Psoas muscle (tissue), 8 donors: ENCODE measurements at regions of chr10 and their contacts with region 1.

Region 1: GRCh38 chr10:119028900-119029612 is 458 bp upstream of the NANOS1 start:
- DNase-seq: peak; percentile 92 to 95
- ATAC-seq: peak; percentile 80 to 86 (median 82)
- H3K4me3 ChIP-seq: peak overlapping the region; percentile 61
- H3K27ac ChIP-seq: peak overlapping the region; percentile 83
- H3K4me1 ChIP-seq: peaks cover 28% of the 10 kb centered on the region
- H3K27me3 ChIP-seq: no peaks in the 10 kb centered on the region
- CTCF ChIP-seq: peak; percentile 33

Region 2: DNA sequence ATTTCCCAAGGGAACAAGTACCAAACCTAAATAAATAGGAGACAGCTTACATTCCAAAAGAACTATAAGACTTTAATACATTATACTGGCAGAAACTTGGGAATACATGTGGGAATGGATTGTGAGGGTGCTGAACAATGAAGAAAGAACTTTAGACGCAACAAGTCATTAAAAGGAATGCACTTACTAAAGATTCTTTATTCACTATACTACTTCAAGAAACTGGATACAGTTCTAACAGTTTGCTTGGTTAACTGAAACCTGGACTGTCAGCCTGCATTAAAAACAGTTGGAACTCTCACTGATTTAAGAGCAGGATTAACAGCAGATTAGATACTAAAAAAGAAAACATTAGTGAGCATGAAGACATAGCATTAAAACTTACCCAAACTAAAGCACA is 286.3 kb before region 1 on chr10:
- intact Hi-C with region 1: loop called in 1 of 2 experiments (anchors 10 kb)
- DNase-seq: no peak
- ATAC-seq: peak in 3 of 4 donors; percentile 15 to 41 (median 39)
- H3K4me3 ChIP-seq: peak overlapping the region; percentile 1
- H3K27ac ChIP-seq: peak overlapping the region; percentile 61
- H3K4me1 ChIP-seq: peaks cover 59% of the 10 kb centered on the region
- H3K27me3 ChIP-seq: no peaks in the 10 kb centered on the region
- CTCF ChIP-seq: no peak

Region 3: DNA sequence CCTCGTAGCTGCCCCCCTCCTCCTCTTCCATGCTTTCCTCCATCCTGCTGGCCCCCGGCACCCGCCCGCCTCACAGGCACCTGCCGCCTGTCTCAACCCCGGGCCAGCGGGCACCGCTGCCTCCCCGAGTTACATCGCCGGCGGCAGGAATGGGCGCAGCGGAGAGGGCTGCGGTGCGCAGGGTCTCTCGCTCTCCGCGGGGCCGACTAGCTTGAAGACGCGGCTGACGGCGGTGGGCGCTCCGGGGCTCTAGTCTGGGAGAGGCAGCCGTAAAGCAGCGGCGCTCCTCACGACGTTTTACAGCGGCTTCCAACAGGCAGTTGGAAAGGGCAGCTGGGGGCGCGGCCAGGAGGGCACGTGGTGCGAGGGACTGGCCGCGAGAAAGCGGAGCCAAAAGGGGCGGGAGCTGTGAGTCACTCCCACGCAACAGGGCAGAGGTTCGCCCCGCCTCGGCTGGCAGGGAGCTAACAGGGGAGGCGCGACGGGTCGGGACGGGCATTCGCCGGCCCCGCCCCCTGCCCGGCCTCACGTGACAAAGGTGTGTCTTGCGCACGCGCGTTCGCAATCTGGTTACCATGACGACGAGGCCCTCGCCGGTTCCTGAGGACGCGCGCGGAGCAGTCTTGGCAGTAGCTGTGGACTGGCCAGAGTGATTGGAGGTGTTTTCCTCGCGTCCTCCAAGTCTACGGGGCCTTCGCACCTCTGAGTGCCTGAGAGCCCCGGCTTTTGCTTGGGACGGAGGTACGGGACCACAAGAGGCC is 274.2 kb before region 1 on chr10 and contains the start of gene CACUL1:
- intact Hi-C with region 1: loop called in 1 of 2 experiments (anchors 10 kb)
- DNase-seq: peak; percentile 100
- ATAC-seq: peak; percentile 95 to 99 (median 98)
- H3K4me3 ChIP-seq: peak within 1 kb of the TSS; percentile 77
- H3K27ac ChIP-seq: peak within 1 kb of the TSS; percentile 93
- H3K4me1 ChIP-seq: peaks cover 32% of the 10 kb centered on the region
- H3K27me3 ChIP-seq: no peaks in the 10 kb centered on the region
- CTCF ChIP-seq: no peak
- total RNA-seq, gene CACUL1: 22.1 to 41.0 (median 39.6) TPM

Region 4: GRCh38 chr10:118870467-118871243 is 158.4 kb before region 1 on chr10:
- intact Hi-C with region 1: loop called in 1 of 2 experiments (anchors 10 kb)
- DNase-seq: no peak
- ATAC-seq: peak in 3 of 4 donors; percentile 46 to 68 (median 58)
- H3K4me3 ChIP-seq: no peak overlapping the region
- H3K27ac ChIP-seq: no peak overlapping the region
- H3K4me1 ChIP-seq: peaks cover 8% of the 10 kb centered on the region
- H3K27me3 ChIP-seq: no peaks in the 10 kb centered on the region
- CTCF ChIP-seq: no peak

Region 5: DNA sequence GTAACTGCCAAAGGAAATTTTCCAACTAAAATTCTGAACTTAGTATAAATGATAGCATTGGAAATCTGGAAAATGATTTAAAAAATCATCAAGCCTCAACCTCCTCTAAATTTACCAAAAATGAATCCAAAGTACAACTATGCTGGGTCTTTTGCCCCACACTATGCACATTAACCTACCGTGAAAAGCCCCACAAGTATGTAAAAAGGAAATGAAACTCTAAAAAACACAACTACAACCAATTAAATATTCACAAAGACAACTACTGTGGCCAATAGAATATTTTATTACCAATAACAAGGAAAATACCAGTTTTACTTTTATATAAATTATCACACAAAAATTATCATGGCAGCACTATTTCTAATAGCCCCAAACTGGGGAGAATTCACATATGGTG is 32.3 kb after region 1 on chr10:
- intact Hi-C with region 1: loop called in 1 of 2 experiments (anchors 5 kb)
- DNase-seq: no peak
- ATAC-seq: no peak
- H3K4me3 ChIP-seq: no peak overlapping the region
- H3K27ac ChIP-seq: no peak overlapping the region
- H3K4me1 ChIP-seq: no peaks in the 10 kb centered on the region
- H3K27me3 ChIP-seq: no peaks in the 10 kb centered on the region
- CTCF ChIP-seq: no peak

Region 6: GRCh38 chr10:119080521-119081260 is 51.6 kb after region 1 on chr10 and contains the start of gene EIF3A:
- intact Hi-C with region 1: loop called in 1 of 2 experiments (anchors 5 kb)
- DNase-seq: peak; percentile 92 to 97
- ATAC-seq: peak; percentile 96 to 97 (median 96)
- H3K4me3 ChIP-seq: peak within 1 kb of the TSS; percentile 82
- H3K27ac ChIP-seq: peak within 1 kb of the TSS; percentile 94
- H3K4me1 ChIP-seq: peaks cover 26% of the 10 kb centered on the region
- H3K27me3 ChIP-seq: no peaks in the 10 kb centered on the region
- CTCF ChIP-seq: no peak
- total RNA-seq, gene EIF3A: 148 to 226 (median 190) TPM